ENCODE measurements at regions of chr13 and their contacts with region 1.

Region 1: GRCh38 chr13:79423801-79424642 is 18.0 kb upstream of the RBM26 start:
- DNase-seq: peak in 4 of 5 donors; percentile 37 to 44 (median 44)
- H3K4me3 ChIP-seq: no peak overlapping the region
- H3K4me3 Mint-ChIP-seq: no peak overlapping the region
- H3K27ac ChIP-seq: no peak overlapping the region
- H3K27ac Mint-ChIP-seq: no peak overlapping the region
- H3K4me1 ChIP-seq: no peaks in the 10 kb centered on the region
- H3K4me1 Mint-ChIP-seq: peaks cover 0 to 2% (median under 1%) of the 10 kb centered on the region in 4 donors
- H3K27me3 ChIP-seq: no peaks in the 10 kb centered on the region
- H3K27me3 Mint-ChIP-seq: no peaks in the 10 kb centered on the region

Region 2: GRCh38 chr13:79405829-79406596 is 18.0 kb before region 1 on chr13 and contains the start of gene RBM26:
- CTCF ChIA-PET with region 1: interaction called, 23 read pairs
- POLR2A ChIA-PET with region 1: interaction called, 6 read pairs
- intact Hi-C with region 1: no loop called
- DNase-seq: peak; percentile 93 to 95 (median 94)
- H3K4me3 ChIP-seq: peak within 1 kb of the TSS; percentile 57 to 72
- H3K4me3 Mint-ChIP-seq: peak within 1 kb of the TSS in 7 of 8 donors; percentile 95 to 96 (median 95)
- H3K27ac ChIP-seq: peak within 1 kb of the TSS; percentile 97
- H3K27ac Mint-ChIP-seq: peak within 1 kb of the TSS in 6 of 7 donors; percentile 97 to 99 (median 98)
- H3K4me1 ChIP-seq: peaks cover 53% of the 10 kb centered on the region
- H3K4me1 Mint-ChIP-seq: peaks cover 16 to 38% (median 28%) of the 10 kb centered on the region in 4 donors
- H3K27me3 ChIP-seq: no peaks in the 10 kb centered on the region
- H3K27me3 Mint-ChIP-seq: no peaks in the 10 kb centered on the region
- total RNA-seq, gene RBM26: 94.1 to 96.3 TPM

Region 3: DNA sequence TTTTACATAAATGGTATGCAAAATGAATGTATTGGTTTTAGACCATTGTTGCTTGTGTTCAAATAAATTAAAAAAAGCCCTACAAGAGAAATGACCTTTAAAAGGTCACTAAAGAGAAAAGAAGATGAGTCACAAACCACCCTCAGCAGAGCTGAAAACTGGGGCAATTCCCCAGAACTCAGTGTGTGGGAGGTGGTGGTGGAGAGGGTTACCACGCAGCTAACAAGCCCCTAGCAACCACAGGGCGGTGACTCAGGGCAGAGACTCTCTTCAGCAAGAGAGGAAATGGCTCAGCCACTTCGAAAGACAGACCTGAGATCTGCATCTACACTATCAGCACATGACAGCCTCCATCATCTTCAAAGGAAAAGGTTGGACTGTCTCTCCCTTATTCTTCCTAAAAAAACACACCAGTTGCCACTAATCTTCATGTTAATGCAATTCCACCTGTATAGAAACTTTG is 27.5 kb after region 1 on chr13:
- CTCF ChIA-PET with region 1: interaction called, 12 read pairs
- POLR2A ChIA-PET with region 1: no interaction called
- intact Hi-C with region 1: loop called (anchors 1 kb)
- DNase-seq: peak; percentile 73 to 96 (median 77)
- H3K4me3 ChIP-seq: peak overlapping the region in 1 of 2 donors; percentile 3
- H3K4me3 Mint-ChIP-seq: peak overlapping the region; percentile 17 to 77 (median 76)
- H3K27ac ChIP-seq: peak overlapping the region; percentile 42
- H3K27ac Mint-ChIP-seq: peak overlapping the region; percentile 83 to 98 (median 94)
- H3K4me1 ChIP-seq: peaks cover 45% of the 10 kb centered on the region
- H3K4me1 Mint-ChIP-seq: peaks cover 28 to 66% (median 39%) of the 10 kb centered on the region in 4 donors
- H3K27me3 ChIP-seq: no peaks in the 10 kb centered on the region
- H3K27me3 Mint-ChIP-seq: no peaks in the 10 kb centered on the region

Region 4: GRCh38 chr13:79480954-79481684 is 57.1 kb after region 1 on chr13 and contains the start of gene NDFIP2:
- CTCF ChIA-PET with region 1: interaction called, 14 read pairs
- POLR2A ChIA-PET with region 1: no interaction called
- intact Hi-C with region 1: loop called (anchors 2 kb)
- DNase-seq: peak; percentile 78 to 91 (median 81)
- H3K4me3 ChIP-seq: peak within 1 kb of the TSS; percentile 52 to 81
- H3K4me3 Mint-ChIP-seq: peak within 1 kb of the TSS; percentile 88 to 96 (median 94)
- H3K27ac ChIP-seq: peak within 1 kb of the TSS; percentile 48
- H3K27ac Mint-ChIP-seq: peak within 1 kb of the TSS; percentile 80 to 93 (median 92)
- H3K4me1 ChIP-seq: peaks cover 22% of the 10 kb centered on the region
- H3K4me1 Mint-ChIP-seq: peaks cover 25 to 42% (median 36%) of the 10 kb centered on the region in 4 donors
- H3K27me3 ChIP-seq: no peaks in the 10 kb centered on the region
- H3K27me3 Mint-ChIP-seq: no peaks in the 10 kb centered on the region
- total RNA-seq, gene NDFIP2: 2.7 to 3.7 TPM

Region 5: DNA sequence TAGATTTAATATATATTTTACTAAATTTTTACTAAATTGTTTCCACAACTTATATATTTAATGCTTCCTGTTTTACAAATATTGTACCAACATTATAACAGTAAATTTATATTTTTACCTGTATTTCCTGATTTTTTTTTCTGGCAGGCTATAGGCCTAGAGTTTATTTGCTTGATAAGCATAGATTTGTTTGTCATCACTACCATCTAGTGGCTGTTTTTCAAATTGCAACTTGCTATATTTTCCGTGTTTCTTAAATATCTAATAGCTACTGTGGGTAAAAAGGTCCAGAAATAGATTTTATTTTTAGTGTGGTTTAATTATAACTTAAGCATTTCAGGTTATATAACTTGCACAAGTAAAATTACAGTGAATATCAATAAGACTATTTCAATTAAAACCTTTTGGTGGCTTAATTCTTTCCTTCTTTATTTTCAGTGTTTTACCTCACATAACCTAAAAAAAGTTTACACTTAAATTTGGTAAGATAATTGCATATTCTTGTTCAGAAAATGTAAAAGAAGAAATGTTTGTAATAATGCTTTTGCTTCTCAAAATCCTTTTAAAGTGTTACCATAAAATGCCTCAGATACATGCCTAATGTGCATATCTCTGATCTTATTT is 117.5 kb after region 1 on chr13:
- CTCF ChIA-PET with region 1: interaction called, 266 read pairs
- POLR2A ChIA-PET with region 1: interaction called, 10 read pairs
- intact Hi-C with region 1: loop called (anchors 1 kb)
- DNase-seq: peak in 4 of 5 donors; percentile 59 to 66 (median 62)
- H3K4me3 ChIP-seq: no peak overlapping the region
- H3K4me3 Mint-ChIP-seq: no peak overlapping the region
- H3K27ac ChIP-seq: no peak overlapping the region
- H3K27ac Mint-ChIP-seq: no peak overlapping the region
- H3K4me1 ChIP-seq: no peaks in the 10 kb centered on the region
- H3K4me1 Mint-ChIP-seq: peaks cover 0 to 2% (median 0%) of the 10 kb centered on the region in 4 donors
- H3K27me3 ChIP-seq: no peaks in the 10 kb centered on the region
- H3K27me3 Mint-ChIP-seq: no peaks in the 10 kb centered on the region

Region 6: DNA sequence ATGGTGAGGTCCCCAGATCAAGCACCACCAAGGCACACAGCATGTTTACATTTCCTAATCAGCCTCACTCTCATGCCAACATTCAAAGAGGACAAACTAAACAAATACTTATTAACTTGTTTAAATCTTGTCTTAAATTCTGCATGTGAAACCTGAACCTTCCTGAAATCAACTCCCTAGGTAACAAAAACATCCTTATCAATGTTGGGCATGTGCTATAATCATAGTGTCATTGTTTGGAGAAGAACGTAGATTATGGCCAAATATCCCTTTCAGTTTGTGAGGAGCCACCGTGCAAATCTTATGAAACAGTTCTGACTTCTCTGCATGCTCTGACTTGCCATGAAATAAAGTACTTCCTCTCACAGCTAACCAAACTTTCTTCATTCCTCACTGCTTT is 180.7 kb after region 1 on chr13:
- CTCF ChIA-PET with region 1: no interaction called
- POLR2A ChIA-PET with region 1: no interaction called
- intact Hi-C with region 1: no loop called
- DNase-seq: no peak
- H3K4me3 ChIP-seq: no peak overlapping the region
- H3K4me3 Mint-ChIP-seq: no peak overlapping the region
- H3K27ac ChIP-seq: no peak overlapping the region
- H3K27ac Mint-ChIP-seq: no peak overlapping the region
- H3K4me1 ChIP-seq: no peaks in the 10 kb centered on the region
- H3K4me1 Mint-ChIP-seq: no peaks in the 10 kb centered on the region
- H3K27me3 ChIP-seq: no peaks in the 10 kb centered on the region
- H3K27me3 Mint-ChIP-seq: no peaks in the 10 kb centered on the region